Psoas muscle (tissue), 8 donors: ENCODE measurements at regions of chr1 and their contacts with region 1.

Region 1: GRCh38 chr1:198079432-198079951 is 77.3 kb upstream of the NEK7 start:
- DNase-seq: no peak
- ATAC-seq: no peak
- H3K4me3 ChIP-seq: no peak overlapping the region
- H3K27ac ChIP-seq: no peak overlapping the region
- H3K4me1 ChIP-seq: no peaks in the 10 kb centered on the region
- H3K27me3 ChIP-seq: peaks cover 0 to 5% (median 0%) of the 10 kb centered on the region in 3 donors
- CTCF ChIP-seq: no peak

Region 2: DNA sequence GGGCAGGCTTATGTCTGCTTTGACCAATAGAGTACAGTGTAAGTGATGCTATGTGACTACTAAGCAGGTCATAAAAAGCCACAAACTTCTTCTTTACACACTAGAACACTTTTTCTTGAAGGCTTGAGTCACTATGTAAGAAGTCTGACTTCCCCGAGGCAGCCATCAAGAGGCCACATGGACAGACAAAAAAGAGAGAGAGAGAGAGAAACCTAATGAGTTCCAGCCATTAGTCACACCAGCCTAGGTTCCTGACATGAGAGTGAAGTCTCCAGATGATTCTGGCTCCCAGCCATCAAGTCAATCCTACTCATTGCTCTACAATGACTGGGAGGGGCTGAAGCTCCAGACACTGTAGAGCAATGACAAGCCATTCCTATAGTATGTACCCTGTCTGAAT is 61.0 kb before region 1 on chr1:
- intact Hi-C with region 1: loop called in 1 of 2 experiments (anchors 2 kb)
- DNase-seq: no peak
- ATAC-seq: no peak
- H3K4me3 ChIP-seq: no peak overlapping the region
- H3K27ac ChIP-seq: no peak overlapping the region
- H3K4me1 ChIP-seq: no peaks in the 10 kb centered on the region
- H3K27me3 ChIP-seq: peaks cover 0 to 1% (median 0%) of the 10 kb centered on the region in 3 donors
- CTCF ChIP-seq: no peak

Region 3: GRCh38 chr1:198064201-198064600 is 15.3 kb before region 1 on chr1:
- intact Hi-C with region 1: no loop called
- DNase-seq: no peak
- ATAC-seq: no peak
- H3K4me3 ChIP-seq: no peak overlapping the region
- H3K27ac ChIP-seq: no peak overlapping the region
- H3K4me1 ChIP-seq: no peaks in the 10 kb centered on the region
- H3K27me3 ChIP-seq: no peaks in the 10 kb centered on the region
- CTCF ChIP-seq: no peak

Region 4: DNA sequence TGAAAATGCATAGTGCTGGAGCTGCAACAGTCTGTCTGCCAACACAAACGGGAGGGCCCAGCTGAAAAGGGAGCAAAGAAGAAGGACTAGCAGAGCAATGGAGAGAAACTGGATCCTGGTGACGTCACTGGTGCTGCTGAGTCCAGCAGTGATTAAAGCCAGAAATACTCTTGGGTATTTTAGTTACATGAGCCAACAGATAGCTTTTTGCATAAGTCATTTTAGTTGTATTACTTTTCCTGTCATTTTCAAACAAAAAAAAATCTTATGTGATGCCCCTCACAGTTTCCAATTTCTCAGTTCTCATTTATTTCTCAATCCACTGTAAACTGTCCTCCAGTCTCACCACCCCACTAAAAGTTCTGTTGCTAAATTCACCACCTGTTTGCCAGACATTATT is 38.6 kb after region 1 on chr1:
- intact Hi-C with region 1: no loop called
- DNase-seq: peak; percentile 51 to 77
- ATAC-seq: peak; percentile 81 to 96 (median 82)
- H3K4me3 ChIP-seq: peak overlapping the region; percentile 19
- H3K27ac ChIP-seq: peak overlapping the region; percentile 34
- H3K4me1 ChIP-seq: peaks cover 8% of the 10 kb centered on the region
- H3K27me3 ChIP-seq: no peaks in the 10 kb centered on the region
- CTCF ChIP-seq: no peak